Body of pancreas (tissue), 4 donors: ENCODE measurements at regions of chr1 and their contacts with region 1.

Region 1: DNA sequence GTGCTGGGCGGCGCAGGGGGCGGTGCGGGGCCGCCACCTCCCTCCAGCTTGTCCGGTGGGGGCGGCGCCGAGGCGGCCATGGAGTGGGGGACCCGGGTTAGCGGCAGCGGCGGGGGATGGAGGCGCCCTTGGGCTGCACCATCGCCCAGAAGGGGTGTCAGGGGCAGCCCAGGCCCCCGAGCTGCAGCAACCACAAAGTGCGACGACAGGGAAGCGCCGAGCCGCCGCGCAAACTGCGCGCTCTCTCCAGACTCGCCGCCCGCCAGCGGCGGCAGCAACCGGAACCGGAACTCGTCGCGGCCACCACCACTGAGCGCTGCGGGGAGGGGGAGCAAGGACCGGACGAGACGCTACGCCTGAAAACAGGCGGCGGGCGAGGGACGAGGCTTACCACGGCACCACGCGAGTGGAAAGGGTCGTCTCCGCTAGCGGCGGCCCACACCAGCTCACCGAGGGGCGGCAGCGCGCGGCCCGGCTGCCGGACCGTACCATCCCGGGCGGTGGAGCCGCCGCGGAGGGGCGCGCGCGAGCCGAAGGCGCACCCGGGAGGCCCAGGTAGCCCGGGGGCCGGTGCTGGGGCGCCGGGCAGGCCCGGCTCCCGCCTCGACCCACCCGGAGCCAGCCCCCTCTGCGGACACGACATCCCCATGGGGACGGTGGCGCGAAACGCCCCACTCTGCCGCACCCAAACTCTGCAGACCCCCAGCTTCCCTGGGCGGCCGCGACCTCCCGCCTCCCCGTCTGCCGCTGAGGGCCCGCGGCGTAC is at the start of gene PYGO2:
- DNase-seq: peak; percentile 73 to 79 (median 76)
- ATAC-seq: peak; percentile 87
- H3K4me3 ChIP-seq: peak within 1 kb of the TSS; percentile 95 to 97
- H3K27ac ChIP-seq: peak within 1 kb of the TSS; percentile 91 to 99 (median 98)
- H3K4me1 ChIP-seq: peaks cover 31% of the 10 kb centered on the region
- H3K27me3 ChIP-seq: no peaks in the 10 kb centered on the region
- CTCF ChIP-seq: peak; percentile 29 to 89 (median 74)
- POLR2A ChIP-seq: peak; percentile 63 to 88 (median 86)
- total RNA-seq, gene PYGO2: 10.9 to 15.2 TPM

Region 2: GRCh38 chr1:154682254-154682653 is 279.4 kb before region 1 on chr1:
- intact Hi-C with region 1: no loop called
- DNase-seq: no peak
- ATAC-seq: no peak
- H3K4me3 ChIP-seq: no peak overlapping the region
- H3K27ac ChIP-seq: no peak overlapping the region
- H3K4me1 ChIP-seq: no peaks in the 10 kb centered on the region
- H3K27me3 ChIP-seq: no peaks in the 10 kb centered on the region
- CTCF ChIP-seq: no peak
- POLR2A ChIP-seq: no peak

Region 3: DNA sequence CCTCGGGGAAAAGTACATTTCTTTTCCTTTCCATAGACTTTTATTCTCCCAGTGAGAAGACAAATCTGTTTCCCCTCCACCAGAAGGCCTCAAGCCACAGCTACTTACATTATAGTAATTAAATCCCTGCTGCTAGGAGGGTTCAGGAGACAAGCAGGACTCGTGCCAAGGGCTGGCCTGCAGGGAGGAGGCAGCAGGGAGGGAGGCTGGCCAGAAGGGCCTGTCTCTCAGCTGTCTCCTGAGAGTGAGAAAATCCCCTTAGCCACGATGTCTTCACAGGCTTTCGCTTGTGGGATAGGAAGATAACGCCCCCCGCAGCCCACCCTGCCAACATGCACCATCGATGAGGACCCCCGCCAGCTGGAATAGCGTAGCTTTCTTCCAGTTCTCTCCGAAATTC is 105.6 kb before region 1 on chr1:
- intact Hi-C with region 1: no loop called
- DNase-seq: no peak
- ATAC-seq: no peak
- H3K4me3 ChIP-seq: no peak overlapping the region
- H3K27ac ChIP-seq: no peak overlapping the region
- H3K4me1 ChIP-seq: no peaks in the 10 kb centered on the region
- H3K27me3 ChIP-seq: no peaks in the 10 kb centered on the region
- CTCF ChIP-seq: no peak
- POLR2A ChIP-seq: no peak

Region 4: DNA sequence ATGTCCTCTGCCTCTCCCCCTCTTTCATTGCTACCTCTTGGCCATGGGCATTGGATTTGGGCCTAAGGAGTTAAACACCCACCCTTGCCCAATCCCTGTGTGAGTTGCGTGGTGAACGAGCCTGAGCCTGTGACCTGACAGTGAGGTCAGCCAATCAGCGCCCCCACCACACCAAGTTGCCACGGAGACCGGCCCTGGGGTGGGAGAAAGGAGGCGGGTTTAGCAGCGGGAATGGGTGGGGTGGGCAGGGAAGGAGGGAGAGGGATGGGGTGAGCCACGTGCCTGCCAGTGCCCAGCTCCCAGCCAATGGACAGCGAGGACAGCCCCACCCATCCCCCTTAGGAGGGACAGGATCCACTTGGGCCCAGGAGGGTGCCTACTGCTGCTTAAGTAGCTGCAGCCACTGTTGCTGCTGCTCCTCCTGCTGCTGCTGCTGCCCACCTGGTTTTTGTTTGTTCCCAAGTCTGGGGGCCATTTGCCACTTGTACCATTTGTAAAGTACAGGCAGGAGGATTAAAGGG is 50.4 kb after region 1 on chr1:
- intact Hi-C with region 1: loop called (anchors 5 kb)
- DNase-seq: peak; percentile 50 to 74 (median 61)
- ATAC-seq: peak; percentile 31
- H3K4me3 ChIP-seq: no peak overlapping the region
- H3K27ac ChIP-seq: peak overlapping the region; percentile 27 to 61 (median 42)
- H3K4me1 ChIP-seq: peaks cover 78% of the 10 kb centered on the region
- H3K27me3 ChIP-seq: no peaks in the 10 kb centered on the region
- CTCF ChIP-seq: no peak
- POLR2A ChIP-seq: no peak

Region 5: DNA sequence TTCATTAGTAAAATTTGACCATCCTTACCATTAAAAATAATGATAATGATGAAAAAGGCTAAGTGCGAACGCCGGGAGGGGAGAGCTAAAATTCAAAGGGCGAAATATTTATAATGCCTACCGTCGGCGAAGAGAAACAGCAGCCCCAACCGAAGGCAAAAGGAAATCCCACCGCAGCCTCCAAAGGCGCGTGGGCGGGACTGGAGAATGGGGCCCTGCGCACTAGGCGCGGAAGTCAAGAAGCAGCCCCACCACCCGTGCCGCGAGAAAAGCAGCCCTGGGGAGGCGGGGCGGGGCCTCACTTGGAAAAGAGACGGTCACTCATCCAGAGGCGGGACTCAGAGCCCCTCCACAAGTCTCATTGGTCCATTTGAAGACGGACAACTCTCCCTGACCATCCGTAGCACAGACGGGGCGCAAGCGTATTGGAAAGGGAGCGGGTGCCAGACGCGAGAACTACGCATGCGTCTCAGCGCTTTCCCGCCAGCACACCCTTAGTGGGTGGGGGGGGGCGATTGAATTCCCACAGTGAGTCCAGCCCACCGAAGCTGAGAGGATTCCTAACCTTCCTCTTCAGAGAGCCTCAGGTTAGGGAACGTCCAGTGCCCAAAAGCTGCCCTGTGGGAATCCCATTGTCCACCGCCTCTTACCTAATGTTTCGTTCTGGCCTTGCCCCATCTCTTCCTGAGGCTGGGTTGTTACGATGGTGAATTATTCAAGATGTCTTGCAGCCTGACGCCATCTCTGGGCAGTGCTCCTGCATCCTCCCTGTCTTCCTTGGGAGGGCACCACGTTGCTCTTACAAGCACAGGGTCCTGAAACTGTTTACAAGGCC is 265.8 kb after region 1 on chr1:
- intact Hi-C with region 1: no loop called
- DNase-seq: peak; percentile 98 to 99 (median 98)
- ATAC-seq: peak; percentile 99
- H3K4me3 ChIP-seq: peak overlapping the region in 1 of 2 donors; percentile 65
- H3K27ac ChIP-seq: peak overlapping the region; percentile 50 to 88 (median 68)
- H3K4me1 ChIP-seq: peaks cover 26% of the 10 kb centered on the region
- H3K27me3 ChIP-seq: no peaks in the 10 kb centered on the region
- CTCF ChIP-seq: no peak
- POLR2A ChIP-seq: peak; percentile 24 to 79 (median 71)